ENCODE measurements at regions of chr11 and their contacts with region 1.

Region 1: GRCh38 chr11:94472916-94473799 is 20.5 kb downstream of the MRE11 start:
- DNase-seq: no peak
- ATAC-seq: peak; percentile 83
- H3K4me3 ChIP-seq: no peak overlapping the region
- H3K4me3 Mint-ChIP-seq: peak overlapping the region in 2 of 10 donors; percentile 37 to 59
- H3K27ac ChIP-seq: no peak overlapping the region
- H3K27ac Mint-ChIP-seq: peak overlapping the region in 2 of 9 donors; percentile 10 to 85
- H3K4me1 ChIP-seq: no peaks in the 10 kb centered on the region
- H3K4me1 Mint-ChIP-seq: peaks cover 8 to 30% (median 18%) of the 10 kb centered on the region in 7 donors
- H3K27me3 ChIP-seq: no peaks in the 10 kb centered on the region
- H3K27me3 Mint-ChIP-seq: no peaks in the 10 kb centered on the region

Region 2: DNA sequence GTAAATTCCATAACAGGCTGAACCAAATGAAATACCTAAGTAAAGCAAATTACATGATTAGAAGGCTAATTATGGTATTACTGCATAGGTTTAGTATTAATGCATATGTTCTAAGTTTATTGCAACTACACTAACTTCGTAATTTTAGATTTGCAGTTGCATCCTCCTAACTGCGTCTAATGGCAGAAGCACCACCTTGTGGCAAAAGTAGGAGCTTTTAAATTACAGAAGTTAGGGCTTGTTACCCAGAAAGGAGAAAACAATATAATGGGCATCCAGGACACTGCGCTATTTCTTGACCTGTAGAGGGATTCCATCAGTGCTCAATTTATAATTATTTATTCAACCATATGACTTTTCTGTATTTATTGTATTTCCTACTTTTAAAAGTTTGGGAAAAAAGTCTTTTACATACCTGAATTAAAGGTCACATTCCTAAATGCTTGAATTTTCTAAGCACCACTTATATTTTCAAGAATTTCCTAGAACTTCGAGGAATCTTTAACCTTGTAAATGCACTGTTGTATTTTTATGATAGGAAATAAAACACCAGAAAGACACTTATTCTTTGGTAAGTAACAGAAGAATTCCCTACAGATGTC is 55.7 kb before region 1 on chr11:
- CTCF ChIA-PET with region 1: no interaction called
- POLR2A ChIA-PET with region 1: no interaction called
- intact Hi-C with region 1: loop called in 1 of 2 experiments (anchors 5 kb)
- DNase-seq: no peak
- ATAC-seq: no peak
- H3K4me3 ChIP-seq: no peak overlapping the region
- H3K4me3 Mint-ChIP-seq: no peak overlapping the region
- H3K27ac ChIP-seq: no peak overlapping the region
- H3K27ac Mint-ChIP-seq: no peak overlapping the region
- H3K4me1 ChIP-seq: no peaks in the 10 kb centered on the region
- H3K4me1 Mint-ChIP-seq: no peaks in the 10 kb centered on the region
- H3K27me3 ChIP-seq: no peaks in the 10 kb centered on the region
- H3K27me3 Mint-ChIP-seq: no peaks in the 10 kb centered on the region

Region 3: GRCh38 chr11:94543695-94544645 is 70.8 kb after region 1 on chr11 and contains the start of gene FUT4:
- CTCF ChIA-PET with region 1: no interaction called
- POLR2A ChIA-PET with region 1: no interaction called
- intact Hi-C with region 1: no loop called
- DNase-seq: peak; percentile 51 to 83 (median 70)
- ATAC-seq: peak; percentile 84
- H3K4me3 ChIP-seq: peak within 1 kb of the TSS; percentile 85
- H3K4me3 Mint-ChIP-seq: peak within 1 kb of the TSS; percentile 93 to 100 (median 98)
- H3K27ac ChIP-seq: peak within 1 kb of the TSS; percentile 88
- H3K27ac Mint-ChIP-seq: peak within 1 kb of the TSS; percentile 96 to 100 (median 99)
- H3K4me1 ChIP-seq: peaks cover 22 to 29% of the 10 kb centered on the region in 2 donors
- H3K4me1 Mint-ChIP-seq: peaks cover 24 to 49% (median 41%) of the 10 kb centered on the region in 7 donors
- H3K27me3 ChIP-seq: no peaks in the 10 kb centered on the region
- H3K27me3 Mint-ChIP-seq: no peaks in the 10 kb centered on the region
- total RNA-seq, gene FUT4: 5.6 to 10.2 (median 6.9) TPM